Activated CD8-positive, alpha-beta memory T cell treated with anti-CD3 and anti-CD28 coated beads, Interleukin-2, amount 10 ng/mL, durations not matched to agents 7 days and 5 days (primary cell): ENCODE measurements at regions of chr20 and their contacts with region 1.

Region 1: GRCh38 chr20:51326201-51326819 is 216.2 kb downstream of the NFATC2 start:
- DNase-seq: peak; percentile 69
- ATAC-seq: peak; percentile 57
- H3K4me3 Mint-ChIP-seq: no peak overlapping the region
- H3K27ac Mint-ChIP-seq: no peak overlapping the region
- H3K4me1 Mint-ChIP-seq: no peaks in the 10 kb centered on the region
- H3K27me3 Mint-ChIP-seq: peaks cover 17% of the 10 kb centered on the region

Region 2: DNA sequence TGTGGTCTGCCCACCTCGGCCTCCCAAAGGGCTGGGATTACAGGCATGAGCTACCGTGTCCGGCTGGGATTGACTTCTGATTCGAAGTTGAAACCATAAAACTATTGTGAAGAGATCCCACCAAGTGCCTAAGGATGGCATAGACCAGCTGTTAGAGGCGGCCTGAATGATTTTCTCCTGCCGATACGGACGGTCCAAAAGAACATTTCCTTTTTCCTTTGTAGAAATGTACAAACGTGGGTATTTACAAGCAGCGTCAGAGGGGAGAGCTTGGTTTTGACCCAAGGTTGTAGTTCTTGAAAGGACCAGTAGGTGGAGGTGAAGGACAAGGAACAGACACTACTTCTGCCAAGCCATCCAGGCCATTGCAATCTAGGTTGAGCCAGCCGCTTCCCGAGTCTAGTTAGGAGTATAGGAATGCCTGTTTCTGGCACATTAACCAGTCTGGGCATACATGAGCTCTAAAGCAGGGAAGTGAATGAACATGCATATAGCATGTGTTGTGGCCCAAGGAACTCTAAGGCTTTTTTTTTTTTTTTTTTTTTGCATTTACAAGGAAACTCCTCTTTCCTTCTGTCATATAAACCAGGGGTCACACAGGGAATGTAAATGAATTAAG is 338.6 kb before region 1 on chr20:
- CTCF ChIA-PET with region 1: interaction called, 48 read pairs
- DNase-seq: peak; percentile 71
- ATAC-seq: peak; percentile 93
- H3K4me3 Mint-ChIP-seq: no peak overlapping the region
- H3K27ac Mint-ChIP-seq: no peak overlapping the region
- H3K4me1 Mint-ChIP-seq: peaks cover 4% of the 10 kb centered on the region
- H3K27me3 Mint-ChIP-seq: peaks cover 40% of the 10 kb centered on the region

Region 3: GRCh38 chr20:50992733-50993457 is 333.4 kb before region 1 on chr20:
- CTCF ChIA-PET with region 1: interaction called, 48 read pairs
- DNase-seq: peak; percentile 70
- ATAC-seq: peak; percentile 99
- H3K4me3 Mint-ChIP-seq: no peak overlapping the region
- H3K27ac Mint-ChIP-seq: no peak overlapping the region
- H3K4me1 Mint-ChIP-seq: peaks cover 2% of the 10 kb centered on the region
- H3K27me3 Mint-ChIP-seq: peaks cover 20% of the 10 kb centered on the region

Region 4: DNA sequence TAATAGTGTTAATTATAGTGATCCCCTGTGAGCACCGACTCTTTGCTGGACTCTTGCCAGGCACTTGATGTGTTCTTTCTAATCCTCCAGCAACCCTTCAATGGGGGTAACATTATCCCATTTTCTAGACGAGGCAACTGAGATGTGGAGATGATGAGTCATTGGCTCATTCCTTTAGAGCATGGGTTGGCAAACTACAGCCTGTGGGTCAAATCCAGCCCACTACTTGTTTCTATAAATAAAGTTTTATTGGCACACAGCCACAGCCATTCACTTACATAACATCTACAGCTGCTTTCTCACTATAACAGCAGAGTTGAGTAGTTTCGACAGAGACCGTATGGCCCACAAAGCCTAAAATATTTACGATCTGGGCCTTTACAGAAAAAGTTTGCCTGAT is 53.9 kb before region 1 on chr20:
- CTCF ChIA-PET with region 1: no interaction called
- DNase-seq: no peak
- ATAC-seq: no peak
- H3K4me3 Mint-ChIP-seq: no peak overlapping the region
- H3K27ac Mint-ChIP-seq: no peak overlapping the region
- H3K4me1 Mint-ChIP-seq: no peaks in the 10 kb centered on the region
- H3K27me3 Mint-ChIP-seq: peaks cover 26% of the 10 kb centered on the region

Region 5: GRCh38 chr20:51315390-51315789 is 10.9 kb before region 1 on chr20:
- CTCF ChIA-PET with region 1: interaction called, 14 read pairs
- DNase-seq: no peak
- ATAC-seq: no peak
- H3K4me3 Mint-ChIP-seq: no peak overlapping the region
- H3K27ac Mint-ChIP-seq: no peak overlapping the region
- H3K4me1 Mint-ChIP-seq: peaks cover 2% of the 10 kb centered on the region
- H3K27me3 Mint-ChIP-seq: peaks cover 15% of the 10 kb centered on the region

Region 6: GRCh38 chr20:51340451-51340840 is 14.1 kb after region 1 on chr20:
- CTCF ChIA-PET with region 1: interaction called, 16 read pairs
- DNase-seq: no peak
- ATAC-seq: no peak
- H3K4me3 Mint-ChIP-seq: no peak overlapping the region
- H3K27ac Mint-ChIP-seq: no peak overlapping the region
- H3K4me1 Mint-ChIP-seq: peaks cover 26% of the 10 kb centered on the region
- H3K27me3 Mint-ChIP-seq: peaks cover 5% of the 10 kb centered on the region